AG04449 (cell line): ENCODE measurements at regions of chr2 and their contacts with region 1.

Region 1: GRCh38 chr2:85635636-85636035 is 19.6 kb downstream of the USP39 start:
- DNase-seq: no peak
- H3K4me3 ChIP-seq: no peak overlapping the region
- CTCF ChIP-seq: no peak

Region 2: DNA sequence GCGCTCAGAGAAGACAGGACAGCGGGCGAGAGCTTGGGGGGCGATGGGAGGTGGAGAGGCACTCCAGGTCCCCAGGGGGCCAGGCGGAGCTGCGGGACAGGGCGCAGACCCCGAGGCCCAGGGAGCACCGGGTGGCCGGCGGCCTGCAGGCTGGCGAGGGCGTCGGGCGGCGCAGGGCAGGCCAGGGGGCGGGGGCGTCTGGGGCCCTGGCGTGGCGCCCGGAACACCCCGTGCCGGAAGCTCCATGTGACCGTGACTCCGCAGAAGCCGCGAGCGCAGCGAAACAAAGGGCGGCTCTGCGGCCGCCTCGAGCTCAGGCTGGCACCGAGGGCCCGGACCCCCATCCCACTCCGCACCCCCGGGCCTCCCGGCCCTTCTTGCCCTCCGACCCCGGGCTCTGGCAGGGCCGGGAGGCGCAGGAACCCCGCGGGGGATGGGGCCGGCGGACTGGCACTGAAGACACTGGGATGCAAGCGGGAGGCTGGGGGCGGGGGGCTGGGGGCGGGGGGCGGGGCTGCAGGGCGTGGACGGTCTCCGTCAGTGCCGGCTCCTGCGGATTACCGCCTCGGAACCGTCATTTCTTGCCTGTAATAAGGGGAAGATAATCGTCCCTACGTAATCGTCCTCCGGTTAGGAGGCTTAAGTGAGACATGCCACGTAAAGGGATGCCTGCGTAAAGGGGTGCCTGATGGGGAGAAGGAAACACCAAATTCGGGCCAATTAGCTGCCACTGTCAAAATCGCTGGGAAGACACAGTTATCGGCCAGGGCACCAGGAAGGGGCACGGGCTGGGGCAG is 197.9 kb before region 1 on chr2:
- CTCF ChIA-PET with region 1: no interaction called
- POLR2A ChIA-PET with region 1: no interaction called
- DNase-seq: no peak
- H3K4me3 ChIP-seq: peak overlapping the region; percentile 45
- CTCF ChIP-seq: no peak

Region 3: GRCh38 chr2:85602476-85603234 is 33.0 kb before region 1 on chr2 and contains the start of gene TMEM150A:
- CTCF ChIA-PET with region 1: interaction called, 15 read pairs
- POLR2A ChIA-PET with region 1: interaction called, 7 read pairs
- DNase-seq: no peak
- H3K4me3 ChIP-seq: peak within 1 kb of the TSS; percentile 99
- CTCF ChIP-seq: peak; percentile 62

Region 4: DNA sequence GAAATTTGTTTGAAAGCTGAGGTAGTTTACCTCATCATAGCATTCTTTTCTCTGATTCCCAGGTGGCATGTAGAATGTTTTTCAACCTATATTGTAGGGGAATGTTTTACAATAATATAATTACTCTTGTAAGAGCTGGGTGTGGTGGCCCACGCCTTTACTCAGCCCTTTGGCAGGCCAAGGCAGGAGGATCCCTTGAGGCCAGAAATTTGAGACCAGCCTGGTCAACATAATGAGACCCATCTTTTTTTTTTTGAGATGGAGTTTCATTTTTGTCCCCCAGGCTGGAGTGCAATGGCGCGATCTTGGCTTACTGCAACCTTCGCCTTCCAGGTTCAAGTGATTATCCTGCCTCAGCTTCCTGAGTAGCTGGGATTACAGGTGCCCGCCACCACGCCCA is 16.0 kb before region 1 on chr2:
- CTCF ChIA-PET with region 1: interaction called, 100 read pairs
- POLR2A ChIA-PET with region 1: interaction called, 4 read pairs
- DNase-seq: no peak
- H3K4me3 ChIP-seq: no peak overlapping the region
- CTCF ChIP-seq: no peak

Region 5: DNA sequence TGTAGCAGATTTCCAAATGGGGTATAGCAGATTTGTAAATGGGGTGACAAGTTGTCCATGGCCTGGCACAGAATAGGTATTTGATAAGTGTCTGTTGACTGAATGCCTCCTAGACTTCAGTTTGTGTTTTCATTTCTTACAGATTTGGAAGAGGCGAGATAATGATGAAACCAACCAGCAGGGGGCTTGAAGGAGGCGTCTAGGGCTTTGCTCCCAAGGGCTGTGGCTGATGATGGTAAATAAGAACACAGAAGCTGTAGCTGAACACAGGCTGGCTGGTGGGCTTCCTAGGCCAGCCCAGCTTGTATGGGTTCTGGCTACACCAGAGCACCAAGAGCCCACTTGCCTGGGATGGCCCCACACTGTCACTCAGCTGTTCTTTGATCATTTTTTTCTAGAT is 13.0 kb after region 1 on chr2:
- CTCF ChIA-PET with region 1: interaction called, 229 read pairs
- POLR2A ChIA-PET with region 1: interaction called, 3 read pairs
- DNase-seq: no peak
- H3K4me3 ChIP-seq: no peak overlapping the region
- CTCF ChIP-seq: peak; percentile 65

Region 6: DNA sequence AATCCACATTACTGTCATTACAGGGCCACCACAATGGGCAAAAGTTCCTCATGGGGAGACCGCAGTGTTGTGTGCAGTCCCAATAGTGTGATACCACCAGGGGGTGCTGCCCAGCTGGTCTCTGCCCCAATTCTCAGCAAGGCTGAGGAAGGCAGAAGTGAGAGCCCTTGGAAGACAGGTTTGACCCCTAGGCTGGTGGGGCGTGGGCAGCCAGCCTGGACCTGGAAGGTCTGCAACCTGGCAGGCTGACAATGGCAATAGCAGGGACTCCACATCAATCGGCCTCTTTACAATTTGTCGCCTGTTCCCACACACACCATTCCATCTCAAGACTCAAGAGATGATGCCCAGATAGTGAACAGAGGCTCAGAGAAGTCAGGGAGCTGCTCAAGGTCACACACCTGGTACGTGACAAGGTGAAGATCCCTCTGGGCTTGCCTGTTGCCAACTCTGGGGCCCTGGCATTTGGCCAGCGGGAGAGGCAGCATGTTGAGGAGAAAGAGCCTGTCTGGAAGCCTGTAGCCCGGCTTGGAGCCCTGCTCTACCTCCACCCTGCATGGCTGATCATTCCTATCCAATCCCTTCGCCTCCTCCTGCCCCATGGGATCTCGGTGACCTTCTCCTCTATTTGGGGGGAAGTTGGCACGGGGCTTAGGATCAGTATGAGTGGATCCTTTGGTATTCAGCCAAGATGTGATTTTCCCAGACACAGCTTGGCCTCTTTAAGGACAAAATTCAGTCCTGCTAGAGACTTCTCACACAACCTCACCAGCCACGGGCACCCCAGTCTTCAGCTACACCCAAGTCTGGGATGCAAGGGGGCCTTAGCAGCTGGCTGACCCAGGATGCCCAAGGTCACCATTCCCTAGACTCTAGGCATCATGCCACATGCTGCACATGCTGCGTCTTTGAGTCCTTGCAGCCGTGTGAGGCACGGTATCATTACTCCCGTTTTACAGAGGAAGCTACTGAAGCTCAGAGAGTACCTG is 115.2 kb after region 1 on chr2:
- CTCF ChIA-PET with region 1: interaction called, 22 read pairs
- POLR2A ChIA-PET with region 1: no interaction called
- DNase-seq: no peak
- H3K4me3 ChIP-seq: no peak overlapping the region
- CTCF ChIP-seq: peak; percentile 87

Region 7: GRCh38 chr2:85852937-85853498 is 217.4 kb after region 1 on chr2:
- CTCF ChIA-PET with region 1: no interaction called
- POLR2A ChIA-PET with region 1: no interaction called
- DNase-seq: no peak
- H3K4me3 ChIP-seq: peak overlapping the region; percentile 38
- CTCF ChIP-seq: no peak